Motor neuron (in vitro differentiated cells): ENCODE measurements at regions of chr22 and their contacts with region 1.

Region 1: DNA sequence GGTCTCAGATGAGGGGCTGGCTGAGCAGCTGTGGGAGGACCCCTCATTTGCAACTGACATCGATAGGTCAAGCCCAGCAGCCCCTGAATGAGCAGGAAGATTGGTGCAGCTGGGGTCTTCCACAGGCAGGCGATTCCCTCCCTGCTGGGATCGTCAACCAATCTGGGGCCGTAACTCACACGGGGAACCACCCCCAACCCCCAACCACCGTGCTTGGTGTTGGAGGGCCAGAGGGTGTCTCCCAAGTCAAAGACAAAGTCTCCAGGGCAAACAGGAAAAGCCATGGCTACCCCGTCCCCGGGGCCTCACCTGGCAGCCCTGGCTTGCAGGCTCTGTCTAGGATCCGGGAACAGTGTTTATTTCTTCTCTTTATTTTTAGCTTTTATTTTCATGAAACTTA is 26.9 kb upstream of the SCUBE1 start:
- ATAC-seq: peak in 5 of 8 experiments; percentile 51 to 71 (median 66)
- H3K4me3 ChIP-seq: no peak overlapping the region
- H3K27ac ChIP-seq: peak overlapping the region in 1 of 2 donors; percentile 12
- H3K4me1 ChIP-seq: peaks cover 7% of the 10 kb centered on the region in 2 donors

Region 2: DNA sequence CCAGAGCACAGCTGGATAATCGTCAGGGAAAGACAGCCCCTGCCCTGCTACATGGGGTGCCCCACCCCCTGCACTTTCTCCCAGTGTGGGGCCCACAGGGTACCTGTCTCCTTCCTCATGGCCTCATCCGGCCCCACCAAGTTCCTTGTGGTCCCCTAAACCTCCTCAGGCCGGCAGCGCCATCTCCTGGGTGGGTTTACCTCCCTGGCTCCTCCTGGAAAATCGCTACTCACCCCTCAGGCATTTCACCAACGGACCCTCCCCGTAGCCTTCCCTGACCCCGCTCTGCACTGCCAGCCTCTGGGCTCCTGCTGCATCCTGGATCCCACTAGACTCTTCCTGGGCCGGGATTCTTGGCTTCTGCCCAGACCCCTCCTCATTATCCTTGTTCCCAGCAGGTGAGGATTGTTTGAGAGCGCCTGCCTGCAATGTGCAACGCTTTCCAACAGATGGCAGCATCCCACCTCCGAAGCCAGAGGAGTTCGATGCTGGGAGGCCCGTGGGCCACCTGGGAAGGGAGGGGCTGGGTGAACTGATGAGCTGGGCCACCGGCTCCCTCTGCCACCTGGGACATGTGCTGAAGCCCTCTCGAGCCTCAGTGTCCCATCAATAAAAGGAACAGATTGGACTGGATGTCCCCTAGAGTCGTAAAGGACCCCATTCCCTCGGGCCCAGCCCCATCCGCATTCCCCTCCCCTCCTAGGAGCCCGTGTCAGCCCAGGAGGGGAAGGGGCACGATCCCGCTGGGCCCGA is 138.9 kb before region 1 on chr22:
- in situ Hi-C with region 1: loop called in 1 of 9 experiments (anchors 25 kb)
- ATAC-seq: peak; percentile 6 to 77 (median 24)
- H3K4me3 ChIP-seq: no peak overlapping the region
- H3K27ac ChIP-seq: no peak overlapping the region
- H3K4me1 ChIP-seq: peaks cover 37 to 47% of the 10 kb centered on the region in 2 donors

Region 3: DNA sequence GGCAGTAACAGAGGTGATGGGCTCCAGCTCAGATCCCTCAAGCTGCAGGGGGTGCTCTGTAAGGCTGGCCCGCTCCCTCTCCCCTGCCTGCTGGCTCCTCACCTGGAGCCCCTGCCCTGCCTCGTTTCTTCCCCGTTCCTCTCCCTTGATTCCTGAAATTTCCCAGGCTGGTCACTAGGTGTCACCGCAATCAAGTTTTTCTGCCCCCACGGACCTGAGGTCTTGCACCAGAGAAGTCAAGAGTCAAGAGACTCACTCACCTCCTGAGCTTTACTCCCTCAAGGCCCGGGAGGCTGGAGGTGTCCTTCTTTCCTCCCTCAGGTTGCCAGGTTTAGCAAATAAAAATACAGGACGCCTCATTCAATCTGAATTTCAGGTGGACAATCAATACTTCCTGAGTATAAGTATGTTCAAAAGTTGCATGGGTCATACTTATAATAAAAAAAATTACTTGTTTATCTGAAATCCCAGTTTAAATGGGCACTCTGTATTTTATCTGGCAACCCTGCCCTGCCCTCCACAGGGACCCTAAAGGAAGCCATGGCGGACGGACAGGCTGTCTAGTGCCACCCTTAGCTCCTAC is 96.0 kb before region 1 on chr22:
- in situ Hi-C with region 1: loop called in 4 of 9 experiments (anchors 25 kb)
- ATAC-seq: peak in 4 of 8 experiments; percentile 3 to 78 (median 62)
- H3K4me3 ChIP-seq: no peak overlapping the region
- H3K27ac ChIP-seq: no peak overlapping the region
- H3K4me1 ChIP-seq: peaks cover 29 to 43% of the 10 kb centered on the region in 2 donors